ENCODE measurements at regions of chr10 and their contacts with region 1.

Region 1: DNA sequence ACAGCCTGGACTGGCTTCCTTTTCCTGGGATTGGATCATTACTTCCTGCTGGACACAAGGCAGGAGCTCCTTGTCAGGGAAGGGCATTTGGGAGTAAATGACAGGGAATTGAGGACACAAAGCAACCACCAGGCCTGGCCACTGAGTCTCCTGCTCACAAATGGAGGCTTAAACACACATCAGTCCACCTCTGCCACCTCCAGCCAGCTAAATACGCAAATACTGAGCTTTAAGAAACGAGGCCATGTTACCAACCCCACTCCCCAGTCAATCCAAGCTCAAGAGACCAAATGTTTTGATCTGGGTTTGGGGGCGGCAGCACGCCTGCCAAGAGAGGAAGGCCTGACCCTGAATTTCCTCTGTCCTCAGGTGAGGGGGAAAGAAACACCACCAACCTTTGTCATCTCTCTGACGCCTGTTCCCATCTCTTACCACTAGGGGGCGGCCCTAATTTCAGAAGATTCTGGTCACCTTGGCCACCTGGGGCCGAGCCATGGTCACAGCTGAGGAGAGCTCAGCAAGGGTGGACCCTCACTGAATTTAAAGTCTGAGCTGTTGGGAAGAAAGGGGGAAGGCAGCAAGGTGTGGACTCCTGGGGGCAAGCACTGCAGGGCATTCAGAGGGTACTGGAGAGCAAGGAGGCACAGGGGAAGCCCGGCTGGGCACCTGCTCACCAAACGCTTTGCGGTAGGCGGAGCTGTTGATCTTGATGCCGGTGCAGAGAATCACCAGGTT is 16.5 kb downstream of the AIFM2 start:
- DNase-seq: peak; percentile 37 to 65 (median 54)
- H3K4me3 ChIP-seq: no peak overlapping the region
- H3K27ac ChIP-seq: no peak overlapping the region
- H3K4me1 ChIP-seq: no peaks in the 10 kb centered on the region
- H3K27me3 ChIP-seq: no peaks in the 10 kb centered on the region
- CTCF ChIP-seq: peak; percentile 61 to 79 (median 76)
- EP300 ChIP-seq: no peak
- POLR2A ChIP-seq: no peak

Region 2: GRCh38 chr10:70146489-70147258 is 30.6 kb after region 1 on chr10 and contains the start of gene TYSND1:
- intact Hi-C with region 1: loop called in 1 of 4 experiments (anchors 2 kb)
- DNase-seq: peak; percentile 97 to 99 (median 98)
- H3K4me3 ChIP-seq: peak within 1 kb of the TSS; percentile 49
- H3K27ac ChIP-seq: peak within 1 kb of the TSS; percentile 36 to 91
- H3K4me1 ChIP-seq: peaks cover 10% of the 10 kb centered on the region
- H3K27me3 ChIP-seq: no peaks in the 10 kb centered on the region
- CTCF ChIP-seq: peak; percentile 63 to 70 (median 68)
- EP300 ChIP-seq: no peak
- POLR2A ChIP-seq: peak; percentile 73
- total RNA-seq, gene TYSND1: 10.1 to 12.4 (median 12.2) TPM

Region 3: DNA sequence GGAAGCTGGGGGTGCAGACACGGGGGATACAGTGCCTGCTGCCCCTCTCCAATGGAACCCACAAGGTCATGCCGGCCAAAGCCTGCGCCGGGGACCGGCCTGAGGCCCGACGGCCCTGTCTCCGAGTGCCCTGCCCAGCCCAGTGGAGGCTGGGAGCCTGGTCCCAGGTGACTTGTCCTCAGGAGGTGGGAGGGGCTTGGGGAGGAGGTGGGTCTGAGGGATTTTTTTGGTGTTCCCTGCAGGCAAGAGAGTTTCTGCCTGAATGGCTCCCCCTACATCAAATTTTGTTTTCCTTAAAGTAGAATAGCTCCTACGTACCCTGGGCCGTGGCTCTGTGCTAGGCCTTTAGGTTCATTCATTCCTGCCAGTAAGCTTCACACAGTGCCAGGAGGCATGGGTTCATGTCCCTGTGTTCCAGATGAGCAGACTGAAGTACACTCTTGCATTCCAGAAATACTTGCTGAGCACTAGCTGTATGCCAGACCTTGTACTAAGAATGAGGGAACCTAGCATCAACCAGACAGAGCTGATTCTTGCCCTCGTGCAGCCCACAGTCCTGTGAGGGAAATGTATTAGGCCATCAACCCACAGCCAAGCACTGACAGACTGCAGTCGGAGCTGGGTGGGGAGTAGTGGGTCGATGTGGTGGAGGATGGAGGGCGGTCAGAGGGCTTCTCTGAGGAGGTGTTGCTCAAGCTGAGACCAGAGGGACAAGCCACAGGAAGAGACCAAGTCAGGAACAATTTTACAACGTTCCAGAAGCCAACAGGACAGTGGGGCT is 637.9 kb after region 1 on chr10:
- intact Hi-C with region 1: no loop called
- DNase-seq: no peak
- H3K4me3 ChIP-seq: no peak overlapping the region
- H3K27ac ChIP-seq: no peak overlapping the region
- H3K4me1 ChIP-seq: no peaks in the 10 kb centered on the region
- H3K27me3 ChIP-seq: no peaks in the 10 kb centered on the region
- CTCF ChIP-seq: no peak
- EP300 ChIP-seq: no peak
- POLR2A ChIP-seq: no peak